Panc1 (cell line): ENCODE measurements at regions of chr3 and their contacts with region 1.

Region 1: DNA sequence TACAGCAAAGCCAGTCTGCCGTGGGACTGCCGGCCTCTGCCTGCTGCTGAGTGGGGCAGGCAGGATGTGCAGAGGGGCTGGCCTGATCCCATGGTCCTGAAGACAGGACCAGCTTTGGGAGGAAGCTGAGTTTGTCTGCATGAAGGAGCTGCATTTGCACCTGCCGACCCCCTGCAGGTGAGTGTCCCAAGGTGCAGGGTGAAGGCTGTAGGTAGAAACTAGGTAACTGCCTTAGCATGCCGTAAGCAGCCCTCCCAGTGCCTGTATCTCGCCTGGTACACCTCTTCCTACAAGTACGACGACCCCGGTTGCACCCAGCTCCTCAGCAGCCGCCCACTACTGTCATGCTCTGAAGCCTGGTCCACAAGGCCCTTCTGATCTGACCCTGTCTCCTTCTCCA is 34.9 kb downstream of the AMOTL2 start:
- DNase-seq: no peak
- ATAC-seq: no peak
- H3K4me3 ChIP-seq: no peak overlapping the region
- H3K27ac ChIP-seq: peak overlapping the region; percentile 59; the same call in 1 of the 2 replicates
- H3K4me1 ChIP-seq: peaks cover 11% of the 10 kb centered on the region
- H3K27me3 ChIP-seq: no peaks in the 10 kb centered on the region
- CTCF ChIP-seq: no peak

Region 2: DNA sequence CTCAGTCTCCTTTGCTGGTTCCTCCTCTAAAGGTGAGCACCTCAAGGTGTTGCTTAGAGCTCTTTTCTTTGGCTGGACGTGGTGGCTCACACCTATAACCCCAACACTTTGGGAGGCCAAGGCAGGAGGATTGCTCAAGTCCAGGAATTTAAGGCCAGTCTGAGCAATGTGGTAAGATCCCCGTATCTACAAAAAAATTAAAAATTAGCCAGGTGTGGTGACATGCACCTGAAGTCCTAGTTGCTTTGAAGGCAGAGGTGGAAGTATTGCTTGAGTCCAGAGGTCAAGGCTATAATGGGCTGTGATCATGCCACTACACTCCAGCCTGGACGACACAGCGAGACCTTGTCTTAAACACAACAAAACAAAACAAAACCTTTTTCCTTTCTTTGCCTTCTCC is 705.9 kb before region 1 on chr3:
- CTCF ChIA-PET with region 1: no interaction called
- POLR2A ChIA-PET with region 1: no interaction called
- in situ Hi-C with region 1: no loop called
- intact Hi-C with region 1: no loop called
- DNase-seq: no peak
- ATAC-seq: no peak
- H3K4me3 ChIP-seq: no peak overlapping the region
- H3K27ac ChIP-seq: no peak overlapping the region
- H3K4me1 ChIP-seq: no peaks in the 10 kb centered on the region
- H3K27me3 ChIP-seq: no peaks in the 10 kb centered on the region
- CTCF ChIP-seq: no peak

Region 3: DNA sequence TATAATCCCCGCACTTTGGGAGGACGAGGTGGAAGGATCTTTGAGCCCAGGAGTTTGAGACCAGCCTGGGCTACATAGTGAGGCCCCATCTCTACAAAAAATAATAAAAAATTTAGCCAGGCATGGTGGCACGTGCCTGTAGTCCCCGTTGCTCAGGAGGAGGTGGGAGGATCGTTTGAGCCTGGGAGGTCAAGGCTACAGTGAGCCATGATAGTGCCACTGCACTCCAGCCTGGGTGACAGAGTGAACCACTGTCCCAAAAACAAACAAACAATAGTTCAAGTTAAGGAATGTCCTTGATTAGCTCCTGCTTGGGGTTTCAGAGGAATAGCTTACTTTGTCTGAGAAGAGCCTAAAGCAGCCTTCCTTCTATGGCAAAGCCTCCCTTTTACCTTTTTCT is 86.6 kb after region 1 on chr3:
- CTCF ChIA-PET with region 1: no interaction called
- POLR2A ChIA-PET with region 1: interaction called, 15 read pairs
- in situ Hi-C with region 1: no loop called
- intact Hi-C with region 1: no loop called
- DNase-seq: no peak
- ATAC-seq: no peak
- H3K4me3 ChIP-seq: no peak overlapping the region
- H3K27ac ChIP-seq: no peak overlapping the region
- H3K4me1 ChIP-seq: peaks cover 9% of the 10 kb centered on the region
- H3K27me3 ChIP-seq: no peaks in the 10 kb centered on the region
- CTCF ChIP-seq: no peak

Region 4: GRCh38 chr3:135056084-135056730 is 716.9 kb after region 1 on chr3:
- CTCF ChIA-PET with region 1: no interaction called
- POLR2A ChIA-PET with region 1: no interaction called
- in situ Hi-C with region 1: no loop called
- intact Hi-C with region 1: no loop called
- DNase-seq: no peak
- ATAC-seq: 0 out of 2 replicates have a peak, but pooled peaks have one; percentile 38
- H3K4me3 ChIP-seq: no peak overlapping the region
- H3K27ac ChIP-seq: no peak overlapping the region
- H3K4me1 ChIP-seq: no peaks in the 10 kb centered on the region
- H3K27me3 ChIP-seq: peaks cover 3% of the 10 kb centered on the region; the same call in 1 of the 2 replicates
- CTCF ChIP-seq: no peak

Region 5: DNA sequence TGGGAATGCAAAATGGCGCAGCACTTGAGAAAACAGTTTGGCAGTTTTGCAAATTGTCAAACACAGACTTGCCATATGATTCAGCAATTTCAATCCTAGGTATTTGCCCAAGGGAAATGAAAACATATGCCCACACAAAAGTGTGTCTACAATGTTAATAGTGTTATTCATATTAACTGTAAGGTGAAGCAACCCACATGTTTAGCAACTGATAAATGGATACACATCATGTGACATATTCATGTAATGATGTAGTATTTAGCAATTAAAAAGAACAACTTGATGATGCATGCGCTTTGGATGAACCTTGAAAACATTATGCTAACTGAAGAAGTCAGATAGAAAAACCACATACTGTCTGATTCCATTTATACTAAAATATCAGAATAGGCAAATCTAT is 1087.2 kb after region 1 on chr3:
- CTCF ChIA-PET with region 1: no interaction called
- POLR2A ChIA-PET with region 1: no interaction called
- in situ Hi-C with region 1: no loop called
- intact Hi-C with region 1: no loop called
- DNase-seq: no peak
- ATAC-seq: no peak
- H3K4me3 ChIP-seq: no peak overlapping the region
- H3K27ac ChIP-seq: no peak overlapping the region
- H3K4me1 ChIP-seq: no peaks in the 10 kb centered on the region
- H3K27me3 ChIP-seq: no peaks in the 10 kb centered on the region
- CTCF ChIP-seq: no peak